Activated CD4-positive, alpha-beta T cell treated with anti-CD3 and anti-CD28 coated beads, Interleukin-2, amount 10 ng/mL, durations not matched to agents 24 days and 14 days (primary cell): ENCODE measurements at regions of chr1 and their contacts with region 1.

Region 1: GRCh38 chr1:198612471-198613260 is 26.2 kb upstream of the PTPRC start:
- DNase-seq: peak; percentile 58
- H3K4me3 Mint-ChIP-seq: peak overlapping the region; percentile 83
- H3K27ac Mint-ChIP-seq: peak overlapping the region; percentile 94
- H3K4me1 Mint-ChIP-seq: peaks cover 59% of the 10 kb centered on the region
- H3K27me3 Mint-ChIP-seq: no peaks in the 10 kb centered on the region

Region 2: GRCh38 chr1:198157241-198157846 is 455.3 kb before region 1 on chr1:
- intact Hi-C with region 1: no loop called
- DNase-seq: peak; percentile 95
- H3K4me3 Mint-ChIP-seq: peak overlapping the region; percentile 97
- H3K27ac Mint-ChIP-seq: peak overlapping the region; percentile 95
- H3K4me1 Mint-ChIP-seq: peaks cover 22% of the 10 kb centered on the region
- H3K27me3 Mint-ChIP-seq: no peaks in the 10 kb centered on the region

Region 3: DNA sequence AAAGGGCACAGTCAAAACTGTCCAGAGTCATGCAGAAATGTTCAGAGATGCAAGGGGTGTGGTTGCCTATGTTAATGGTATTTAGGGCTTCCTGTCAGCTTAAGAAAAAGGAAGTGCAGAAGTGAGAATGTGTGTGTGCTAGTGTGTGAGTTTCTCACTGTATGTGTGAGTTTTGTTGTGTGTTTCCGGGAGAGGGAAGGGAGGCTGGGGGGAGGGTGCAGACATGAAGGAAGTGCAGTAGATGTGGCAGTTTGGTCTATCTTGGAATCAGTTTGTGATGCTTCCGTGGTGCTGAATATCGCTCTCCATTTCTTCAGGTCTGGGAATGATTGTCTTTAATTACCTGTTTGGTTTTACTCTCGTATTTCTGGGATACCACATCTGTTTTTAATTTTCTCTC is 55.7 kb before region 1 on chr1:
- intact Hi-C with region 1: loop called (anchors 2 kb)
- DNase-seq: peak; percentile 86
- H3K4me3 Mint-ChIP-seq: peak overlapping the region; percentile 69
- H3K27ac Mint-ChIP-seq: peak overlapping the region; percentile 31
- H3K4me1 Mint-ChIP-seq: peaks cover 36% of the 10 kb centered on the region
- H3K27me3 Mint-ChIP-seq: peaks cover 1% of the 10 kb centered on the region

Region 4: DNA sequence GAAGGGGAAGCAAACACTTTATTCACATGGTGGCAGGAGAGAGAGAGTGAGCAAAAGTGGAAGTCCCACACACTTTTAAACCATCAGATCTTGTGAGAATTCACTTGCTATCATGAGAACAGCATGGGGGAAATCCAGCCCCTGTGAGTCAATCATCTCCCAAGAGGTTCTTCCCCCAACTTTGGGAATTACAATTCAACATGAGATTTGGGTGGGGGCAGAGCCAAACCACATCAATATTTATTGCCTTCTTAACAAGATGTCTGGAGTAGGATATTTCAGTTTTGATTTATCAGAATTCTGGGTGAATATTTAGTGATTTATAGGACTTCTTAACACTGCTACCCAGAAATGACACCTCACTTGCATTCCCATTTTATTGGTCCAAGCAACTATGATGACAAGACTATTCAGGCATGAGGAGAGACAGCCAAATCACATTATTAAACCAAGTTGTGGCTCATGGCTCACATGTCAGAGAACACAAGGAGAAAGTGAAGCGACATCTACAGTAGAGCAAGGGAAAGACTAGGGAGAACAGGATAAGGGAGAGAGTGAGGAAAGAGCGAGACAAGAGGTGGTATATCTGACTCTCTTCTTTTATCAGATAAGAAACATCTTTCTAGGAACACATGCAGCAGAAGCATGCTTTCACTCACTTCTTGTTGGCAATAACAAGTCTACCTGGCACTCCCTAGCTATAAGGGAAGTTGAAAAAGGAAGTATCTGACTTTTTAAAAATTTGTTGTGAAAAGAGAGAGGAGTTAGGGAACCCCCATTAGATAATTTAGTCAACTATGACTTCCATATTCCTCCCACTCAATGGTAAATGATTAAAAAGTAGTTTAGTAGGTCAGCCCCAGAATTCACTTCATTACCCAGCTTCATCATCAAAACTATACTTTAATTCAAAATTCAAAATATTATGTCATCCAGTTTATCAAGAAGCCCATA is 10.5 kb before region 1 on chr1:
- intact Hi-C with region 1: loop called (anchors 1 kb)
- DNase-seq: no peak
- H3K4me3 Mint-ChIP-seq: peak overlapping the region; percentile 32
- H3K27ac Mint-ChIP-seq: peak overlapping the region; percentile 83
- H3K4me1 Mint-ChIP-seq: peaks cover 55% of the 10 kb centered on the region
- H3K27me3 Mint-ChIP-seq: no peaks in the 10 kb centered on the region